ENCODE measurements at regions of chr7 and their contacts with region 1.

Region 1: GRCh38 chr7:139901056-139901795 is 72.2 kb downstream of the TBXAS1 start:
- DNase-seq: peak; percentile 71
- ATAC-seq: peak; percentile 93
- H3K4me3 ChIP-seq: peak overlapping the region in 1 of 5 experiments; percentile 32
- H3K4me3 Mint-ChIP-seq: peak overlapping the region; percentile 17
- H3K27ac ChIP-seq: peak overlapping the region in 1 of 2 donors; percentile 48
- H3K27ac Mint-ChIP-seq: no peak overlapping the region
- H3K4me1 ChIP-seq: peaks cover 19 to 23% of the 10 kb centered on the region in 2 donors
- H3K4me1 Mint-ChIP-seq: peaks cover 47% of the 10 kb centered on the region
- H3K27me3 ChIP-seq: no peaks in the 10 kb centered on the region
- H3K27me3 Mint-ChIP-seq: no peaks in the 10 kb centered on the region
- CTCF ChIP-seq: no peak

Region 2: GRCh38 chr7:139598445-139599049 is 302.7 kb before region 1 on chr7:
- CTCF ChIA-PET with region 1: no interaction called
- POLR2A ChIA-PET with region 1: no interaction called
- intact Hi-C with region 1: no loop called
- DNase-seq: no peak
- ATAC-seq: no peak
- H3K4me3 ChIP-seq: no peak overlapping the region
- H3K4me3 Mint-ChIP-seq: no peak overlapping the region
- H3K27ac ChIP-seq: no peak overlapping the region
- H3K27ac Mint-ChIP-seq: no peak overlapping the region
- H3K4me1 ChIP-seq: no peaks in the 10 kb centered on the region
- H3K4me1 Mint-ChIP-seq: no peaks in the 10 kb centered on the region
- H3K27me3 ChIP-seq: no peaks in the 10 kb centered on the region
- H3K27me3 Mint-ChIP-seq: no peaks in the 10 kb centered on the region
- CTCF ChIP-seq: no peak

Region 3: DNA sequence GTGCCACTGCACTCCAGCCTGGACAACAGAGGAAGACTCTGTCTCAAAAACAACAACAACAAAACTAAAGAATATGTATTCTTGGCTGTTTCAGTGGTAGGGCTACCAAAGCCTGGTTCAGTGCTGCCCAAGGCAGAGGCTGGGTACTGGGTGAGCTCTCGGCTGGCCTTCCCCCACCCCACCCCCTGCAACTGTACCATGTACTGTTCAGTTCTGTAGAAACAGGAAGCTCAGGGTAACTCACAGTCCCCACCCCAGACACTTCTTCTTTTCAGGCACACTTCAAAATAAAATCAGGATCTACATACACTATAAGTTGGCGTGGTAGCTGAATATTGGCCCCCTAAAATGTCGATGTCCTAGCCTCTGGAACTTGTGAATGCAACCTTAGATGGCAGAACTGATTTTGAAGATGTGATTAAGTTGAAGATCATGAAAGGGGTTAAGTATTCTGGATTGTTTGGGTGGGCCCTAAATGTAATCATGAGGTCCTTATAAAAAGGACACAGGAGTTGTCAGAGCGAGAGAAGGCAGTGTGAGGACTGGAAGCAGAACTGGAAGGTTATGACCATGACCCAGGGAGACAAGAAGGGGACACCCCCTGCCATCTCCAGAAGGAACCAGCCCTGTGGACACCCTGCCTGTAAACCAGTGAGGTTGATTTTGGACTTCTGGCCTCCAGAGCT is 41.0 kb before region 1 on chr7:
- CTCF ChIA-PET with region 1: interaction called, 4 read pairs
- POLR2A ChIA-PET with region 1: no interaction called
- intact Hi-C with region 1: loop called (anchors 5 kb)
- DNase-seq: peak; percentile 66
- ATAC-seq: peak; percentile 93
- H3K4me3 ChIP-seq: peak overlapping the region in 1 of 5 experiments; percentile 23
- H3K4me3 Mint-ChIP-seq: peak overlapping the region; percentile 82
- H3K27ac ChIP-seq: peak overlapping the region; percentile 50 to 86
- H3K27ac Mint-ChIP-seq: peak overlapping the region; percentile 94
- H3K4me1 ChIP-seq: peaks cover 29 to 30% of the 10 kb centered on the region in 2 donors
- H3K4me1 Mint-ChIP-seq: peaks cover 22% of the 10 kb centered on the region
- H3K27me3 ChIP-seq: no peaks in the 10 kb centered on the region
- H3K27me3 Mint-ChIP-seq: no peaks in the 10 kb centered on the region
- CTCF ChIP-seq: no peak